ENCODE measurements at regions of chr3 and their contacts with region 1.

Region 1: GRCh38 chr3:33074217-33075067 is 22.5 kb downstream of the GLB1 start:
- DNase-seq: no peak
- H3K4me3 ChIP-seq: no peak overlapping the region
- H3K27me3 ChIP-seq: no peaks in the 10 kb centered on the region
- CTCF ChIP-seq: peak; percentile 98

Region 2: GRCh38 chr3:32922078-32922477 is 152.4 kb before region 1 on chr3:
- CTCF ChIA-PET with region 1: no interaction called
- POLR2A ChIA-PET with region 1: no interaction called
- DNase-seq: no peak
- H3K4me3 ChIP-seq: no peak overlapping the region
- H3K27me3 ChIP-seq: no peaks in the 10 kb centered on the region
- CTCF ChIP-seq: no peak

Region 3: GRCh38 chr3:32947789-32948238 is 126.6 kb before region 1 on chr3:
- CTCF ChIA-PET with region 1: interaction called, 54 read pairs
- POLR2A ChIA-PET with region 1: no interaction called
- DNase-seq: no peak
- H3K4me3 ChIP-seq: no peak overlapping the region
- H3K27me3 ChIP-seq: no peaks in the 10 kb centered on the region; the same call in 1 of the 2 replicates
- CTCF ChIP-seq: peak; percentile 83

Region 4: DNA sequence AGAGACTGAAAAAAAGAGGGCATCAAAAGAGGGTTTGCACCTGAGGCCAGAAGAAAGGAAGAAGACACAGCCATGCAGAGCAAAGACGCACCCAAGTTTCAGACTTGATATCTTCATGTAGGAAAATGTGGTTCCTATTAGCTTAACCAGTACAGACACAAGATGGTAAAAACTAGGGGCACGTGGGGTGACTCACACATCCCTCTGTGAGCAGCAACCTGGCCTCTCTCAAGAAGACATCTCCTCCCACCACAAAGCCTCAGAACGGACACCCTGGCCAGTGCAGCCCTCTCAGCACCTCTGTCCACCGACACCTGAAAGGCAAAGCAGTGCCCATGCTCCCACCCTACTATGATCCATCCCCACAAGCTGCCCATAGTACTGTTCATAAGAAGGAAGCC is 10.8 kb before region 1 on chr3:
- CTCF ChIA-PET with region 1: interaction called, 55 read pairs
- POLR2A ChIA-PET with region 1: no interaction called
- DNase-seq: peak; percentile 53
- H3K4me3 ChIP-seq: no peak overlapping the region
- H3K27me3 ChIP-seq: no peaks in the 10 kb centered on the region
- CTCF ChIP-seq: no peak

Region 5: DNA sequence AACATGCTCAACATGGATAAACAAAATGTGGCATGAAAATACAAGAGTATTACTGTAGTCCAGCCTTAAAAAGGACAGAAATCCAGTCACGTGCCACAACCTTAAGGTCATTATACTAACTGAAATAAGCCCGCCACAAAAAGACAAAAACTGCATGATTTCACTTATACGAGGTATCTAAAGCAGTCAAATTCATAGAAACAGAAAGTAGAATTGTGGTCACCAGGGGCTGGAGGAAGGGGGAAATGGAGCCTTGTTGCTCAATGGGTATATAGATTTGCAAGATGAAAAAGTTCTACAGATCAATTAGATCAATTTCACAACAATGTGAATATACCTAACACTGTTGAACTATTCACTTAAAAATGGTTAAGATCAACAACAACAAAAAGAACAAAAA is 15.1 kb after region 1 on chr3:
- CTCF ChIA-PET with region 1: interaction called, 14 read pairs
- POLR2A ChIA-PET with region 1: no interaction called
- DNase-seq: no peak
- H3K4me3 ChIP-seq: no peak overlapping the region
- H3K27me3 ChIP-seq: no peaks in the 10 kb centered on the region
- CTCF ChIP-seq: no peak

Region 6: GRCh38 chr3:33105341-33105948 is 31.0 kb after region 1 on chr3:
- CTCF ChIA-PET with region 1: no interaction called
- POLR2A ChIA-PET with region 1: no interaction called
- DNase-seq: no peak
- H3K4me3 ChIP-seq: no peak overlapping the region
- H3K27me3 ChIP-seq: no peaks in the 10 kb centered on the region
- CTCF ChIP-seq: no peak

Region 7: DNA sequence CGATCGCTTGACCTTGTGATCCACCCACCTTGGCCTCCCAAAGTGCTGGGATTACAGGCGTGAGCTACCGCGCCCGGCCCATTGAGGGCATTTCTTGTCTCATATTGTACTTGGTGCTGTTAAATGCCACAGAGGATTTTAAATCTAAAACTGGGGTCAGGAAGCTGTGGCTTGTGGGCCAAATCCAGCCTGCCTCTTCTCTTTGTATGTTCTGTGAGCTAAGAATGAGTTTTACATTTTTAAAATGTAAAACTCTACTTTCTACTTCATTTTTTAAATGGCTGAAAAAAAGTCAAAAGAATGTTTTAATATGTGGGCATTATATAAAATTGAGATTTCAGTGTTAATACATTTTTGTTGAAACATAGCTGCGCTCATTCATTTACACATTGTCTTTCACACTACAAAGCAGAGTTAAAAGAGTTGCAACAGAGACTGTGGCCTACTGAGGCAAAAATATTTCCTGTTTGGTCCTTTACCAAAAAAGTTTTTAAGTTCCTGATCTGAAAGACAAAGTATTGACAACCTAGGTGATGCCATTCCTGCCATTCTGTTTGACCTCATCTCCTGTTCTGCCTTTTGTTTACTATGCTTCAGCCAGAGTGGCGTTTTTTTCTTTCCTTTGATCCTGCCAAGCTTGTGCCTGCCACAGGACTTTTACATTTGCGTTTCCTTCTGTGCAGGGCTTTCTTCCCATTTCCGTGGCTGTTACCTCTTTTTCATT is 774.3 kb after region 1 on chr3:
- CTCF ChIA-PET with region 1: no interaction called
- POLR2A ChIA-PET with region 1: no interaction called
- DNase-seq: no peak
- H3K4me3 ChIP-seq: no peak overlapping the region
- H3K27me3 ChIP-seq: no peaks in the 10 kb centered on the region
- CTCF ChIP-seq: no peak